ENCODE measurements at regions of chr10 and their contacts with region 1.

Region 1: GRCh38 chr10:48656241-48656913 is 28.3 kb upstream of the WDFY4 start:
- DNase-seq: peak; percentile 88
- ATAC-seq: peak; percentile 93
- H3K4me3 ChIP-seq: peak overlapping the region; percentile 47
- H3K27ac ChIP-seq: no peak overlapping the region; the same call in 1 of the 2 replicates
- H3K4me1 ChIP-seq: peaks cover 7% of the 10 kb centered on the region; the same call in 1 of the 2 replicates
- H3K27me3 ChIP-seq: peaks cover 6% of the 10 kb centered on the region
- CTCF ChIP-seq: peak; percentile 100
- POLR2A ChIP-seq: no peak
- RAD21 ChIP-seq: peak; percentile 100

Region 2: GRCh38 chr10:48523820-48524758 is 132.3 kb before region 1 on chr10:
- CTCF ChIA-PET with region 1: interaction called, 13 read pairs
- POLR2A ChIA-PET with region 1: no interaction called
- dilution Hi-C with region 1: no loop called
- in situ Hi-C with region 1: no loop called
- intact Hi-C with region 1: no loop called
- DNase-seq: no peak
- ATAC-seq: peak; percentile 55
- H3K4me3 ChIP-seq: peak overlapping the region; percentile 42
- H3K27ac ChIP-seq: peak overlapping the region; percentile 15; the same call in 1 of the 2 replicates
- H3K4me1 ChIP-seq: peaks cover 21% of the 10 kb centered on the region
- H3K27me3 ChIP-seq: no peaks in the 10 kb centered on the region
- CTCF ChIP-seq: peak; percentile 59
- POLR2A ChIP-seq: no peak
- RAD21 ChIP-seq: peak; percentile 30

Region 3: GRCh38 chr10:48572414-48572813 is 84.0 kb before region 1 on chr10:
- CTCF ChIA-PET with region 1: interaction called, 11 read pairs
- POLR2A ChIA-PET with region 1: no interaction called
- dilution Hi-C with region 1: no loop called
- in situ Hi-C with region 1: no loop called
- intact Hi-C with region 1: no loop called
- DNase-seq: peak; percentile 73
- ATAC-seq: peak; percentile 84
- H3K4me3 ChIP-seq: no peak overlapping the region
- H3K27ac ChIP-seq: no peak overlapping the region
- H3K4me1 ChIP-seq: peaks cover 2% of the 10 kb centered on the region; the same call in 1 of the 2 replicates
- H3K27me3 ChIP-seq: no peaks in the 10 kb centered on the region
- CTCF ChIP-seq: no peak
- POLR2A ChIP-seq: no peak
- RAD21 ChIP-seq: no peak

Region 4: GRCh38 chr10:48736596-48736995 is 80.2 kb after region 1 on chr10:
- CTCF ChIA-PET with region 1: no interaction called
- POLR2A ChIA-PET with region 1: no interaction called
- dilution Hi-C with region 1: no loop called
- in situ Hi-C with region 1: no loop called
- intact Hi-C with region 1: no loop called
- DNase-seq: no peak
- ATAC-seq: no peak
- H3K4me3 ChIP-seq: no peak overlapping the region
- H3K27ac ChIP-seq: no peak overlapping the region
- H3K4me1 ChIP-seq: no peaks in the 10 kb centered on the region
- H3K27me3 ChIP-seq: peaks cover 7% of the 10 kb centered on the region
- CTCF ChIP-seq: no peak
- POLR2A ChIP-seq: no peak
- RAD21 ChIP-seq: no peak

Region 5: DNA sequence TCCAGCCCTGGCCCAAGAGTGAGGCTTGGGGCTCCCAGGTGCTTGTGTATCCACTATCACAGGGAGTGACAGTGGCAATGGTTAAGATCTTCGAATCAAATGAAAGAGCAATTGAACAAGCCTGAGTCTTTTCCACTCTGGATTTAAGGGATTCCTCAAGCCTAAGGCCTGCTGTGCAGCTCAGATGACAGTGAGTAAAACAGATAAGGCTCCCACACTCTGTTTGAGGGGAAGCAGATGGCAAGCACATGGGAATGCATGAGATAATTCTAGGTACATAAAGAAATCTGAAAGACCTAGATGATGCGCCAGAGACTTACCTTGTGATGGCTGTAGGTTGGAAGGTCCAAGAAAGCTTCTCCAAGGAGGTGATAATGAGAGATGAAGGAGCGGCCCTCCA is 188.2 kb after region 1 on chr10:
- CTCF ChIA-PET with region 1: no interaction called
- POLR2A ChIA-PET with region 1: no interaction called
- dilution Hi-C with region 1: no loop called
- in situ Hi-C with region 1: no loop called
- intact Hi-C with region 1: no loop called
- DNase-seq: no peak
- ATAC-seq: no peak
- H3K4me3 ChIP-seq: no peak overlapping the region
- H3K27ac ChIP-seq: no peak overlapping the region
- H3K4me1 ChIP-seq: no peaks in the 10 kb centered on the region
- H3K27me3 ChIP-seq: peaks cover 12% of the 10 kb centered on the region
- CTCF ChIP-seq: no peak
- POLR2A ChIP-seq: no peak
- RAD21 ChIP-seq: no peak

Region 6: DNA sequence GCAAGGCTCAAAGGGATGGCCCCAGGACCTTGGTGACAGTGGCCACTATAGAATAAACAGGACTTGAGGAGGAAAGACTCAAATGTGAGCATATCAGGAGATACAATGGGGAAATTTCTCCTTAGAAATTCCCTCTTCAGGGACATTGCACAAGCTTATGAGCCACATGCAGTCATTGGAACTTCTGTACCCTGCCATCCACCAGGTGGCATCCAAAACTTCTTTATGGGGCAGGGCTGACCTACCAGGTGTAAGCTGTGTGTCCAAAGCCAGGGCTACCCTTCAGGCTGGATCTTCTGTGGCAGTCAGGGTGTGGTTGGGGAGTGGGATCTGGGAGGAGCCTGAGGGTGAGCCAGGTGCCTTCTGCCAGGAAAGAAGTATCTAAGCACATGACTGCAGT is 319.8 kb after region 1 on chr10:
- CTCF ChIA-PET with region 1: no interaction called
- POLR2A ChIA-PET with region 1: no interaction called
- dilution Hi-C with region 1: no loop called
- in situ Hi-C with region 1: no loop called
- intact Hi-C with region 1: loop called (anchors 10 kb)
- DNase-seq: peak; percentile 4
- ATAC-seq: peak; percentile 53
- H3K4me3 ChIP-seq: no peak overlapping the region
- H3K27ac ChIP-seq: no peak overlapping the region
- H3K4me1 ChIP-seq: no peaks in the 10 kb centered on the region
- H3K27me3 ChIP-seq: peaks cover 20% of the 10 kb centered on the region
- CTCF ChIP-seq: 0 out of 2 replicates have a peak, but pooled peaks have one; percentile 17
- POLR2A ChIP-seq: no peak
- RAD21 ChIP-seq: peak; percentile 31

Region 7: GRCh38 chr10:49512121-49512809 is 855.9 kb after region 1 on chr10:
- CTCF ChIA-PET with region 1: interaction called, 10 read pairs
- POLR2A ChIA-PET with region 1: no interaction called
- dilution Hi-C with region 1: no loop called
- in situ Hi-C with region 1: loop called (anchors 5 kb)
- intact Hi-C with region 1: no loop called
- DNase-seq: peak; percentile 43
- ATAC-seq: peak; percentile 81
- H3K4me3 ChIP-seq: no peak overlapping the region
- H3K27ac ChIP-seq: no peak overlapping the region
- H3K4me1 ChIP-seq: peaks cover 2% of the 10 kb centered on the region; the same call in 1 of the 2 replicates
- H3K27me3 ChIP-seq: no peaks in the 10 kb centered on the region
- CTCF ChIP-seq: peak; percentile 70
- POLR2A ChIP-seq: no peak
- RAD21 ChIP-seq: peak; percentile 82

Measured in IMR-90 (cell line).